ENCODE measurements at regions of chr7 and their contacts with region 1.

Region 1: DNA sequence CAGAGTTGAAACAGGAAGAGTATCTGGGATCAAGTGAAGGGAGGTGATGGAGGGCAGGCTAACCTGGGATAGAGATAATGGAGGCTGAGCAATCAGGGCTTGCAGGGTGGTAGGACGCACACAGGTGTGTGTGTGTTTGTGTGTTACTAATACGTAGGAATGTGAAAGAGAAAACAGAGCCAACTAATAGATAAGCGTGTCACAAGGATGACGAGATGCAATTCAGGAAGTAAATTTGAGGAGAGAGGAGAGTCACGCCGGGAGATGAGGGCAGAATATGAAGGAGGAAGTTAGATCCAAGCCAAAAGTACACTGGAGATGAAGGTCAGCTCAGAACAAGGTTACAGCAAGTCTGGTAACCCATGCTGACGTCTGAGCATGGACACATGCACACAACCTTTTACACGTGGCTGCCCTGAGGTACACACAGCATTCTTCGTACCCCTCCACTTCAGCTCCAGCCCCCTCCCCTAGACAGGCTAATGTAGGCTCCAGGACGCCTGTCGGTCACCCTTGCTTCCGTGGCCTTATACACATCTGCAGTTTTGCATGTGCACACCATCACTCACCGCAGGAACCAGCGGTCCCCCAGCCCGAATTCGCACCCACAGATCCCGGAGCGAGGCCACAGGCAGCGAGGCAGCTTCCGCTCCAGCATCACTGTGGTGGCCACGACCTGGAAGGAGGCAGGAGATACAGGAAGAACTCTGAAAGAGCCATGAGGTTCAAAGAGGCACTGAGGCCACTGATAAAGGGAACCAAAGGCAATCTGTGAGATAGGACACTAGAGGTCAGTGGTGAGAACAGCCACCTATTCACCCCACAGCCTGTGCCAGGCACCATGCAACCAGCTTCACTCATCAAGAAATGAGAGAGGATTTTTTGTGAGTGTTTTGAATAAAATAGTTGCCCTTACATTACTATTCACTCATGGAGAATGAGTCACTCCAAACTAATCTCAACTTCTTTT is 23.7 kb upstream of the TRPV6 start:
- DNase-seq: peak; percentile 46
- H3K4me3 Mint-ChIP-seq: no peak overlapping the region
- H3K27ac Mint-ChIP-seq: no peak overlapping the region
- H3K4me1 Mint-ChIP-seq: no peaks in the 10 kb centered on the region
- H3K27me3 Mint-ChIP-seq: peaks cover 73% of the 10 kb centered on the region
- CTCF ChIP-seq: peak; percentile 29

Region 2: GRCh38 chr7:142898377-142899170 is 10.6 kb before region 1 on chr7:
- CTCF ChIA-PET with region 1: interaction called, 10 read pairs
- POLR2A ChIA-PET with region 1: no interaction called
- intact Hi-C with region 1: no loop called
- DNase-seq: peak; percentile 62
- H3K4me3 Mint-ChIP-seq: no peak overlapping the region
- H3K27ac Mint-ChIP-seq: no peak overlapping the region
- H3K4me1 Mint-ChIP-seq: no peaks in the 10 kb centered on the region
- H3K27me3 Mint-ChIP-seq: peaks cover 76% of the 10 kb centered on the region
- CTCF ChIP-seq: no peak

Region 3: DNA sequence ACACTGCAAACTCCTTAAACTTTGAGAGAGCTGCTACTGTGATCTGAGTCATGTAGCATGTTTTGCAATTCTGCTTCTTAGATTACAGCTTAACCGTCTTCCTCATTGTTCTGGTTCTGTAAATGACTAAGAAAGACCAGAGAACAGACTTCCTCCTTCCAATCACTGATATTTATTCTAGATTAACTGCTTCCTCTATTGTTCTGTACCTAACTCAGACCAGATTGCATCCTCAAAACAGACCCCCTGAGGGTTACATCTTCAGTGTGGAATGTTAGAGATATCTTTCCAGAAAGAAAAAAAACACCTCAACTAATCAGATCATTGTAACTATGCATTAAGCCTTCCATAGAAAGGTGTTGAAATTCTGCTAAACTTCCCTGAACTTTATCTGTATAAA is 216.9 kb after region 1 on chr7:
- CTCF ChIA-PET with region 1: no interaction called
- POLR2A ChIA-PET with region 1: no interaction called
- intact Hi-C with region 1: no loop called
- DNase-seq: peak; percentile 57
- H3K4me3 Mint-ChIP-seq: no peak overlapping the region
- H3K27ac Mint-ChIP-seq: no peak overlapping the region
- H3K4me1 Mint-ChIP-seq: no peaks in the 10 kb centered on the region
- H3K27me3 Mint-ChIP-seq: no peaks in the 10 kb centered on the region
- CTCF ChIP-seq: no peak